Heart right ventricle (tissue), 16 donors: ENCODE measurements at regions of chrX and their contacts with region 1.

Region 1: GRCh38 chrX:69285881-69286564 is 120.8 kb upstream of the PJA1 start:
- DNase-seq: peak; percentile 49 to 71
- ATAC-seq: peak; percentile 72 to 89 (median 86)
- H3K4me3 ChIP-seq: peak overlapping the region; percentile 4 to 55 (median 45)
- H3K27ac ChIP-seq: peak overlapping the region in 3 of 10 donors; percentile 30 to 55 (median 31)
- H3K4me1 ChIP-seq: peaks cover 0 to 10% (median 5%) of the 10 kb centered on the region in 9 donors
- H3K27me3 ChIP-seq: peaks cover 0 to 36% (median 0%) of the 10 kb centered on the region in 7 donors
- CTCF ChIP-seq: peak; percentile 60 to 92 (median 83)

Region 2: GRCh38 chrX:68822641-68823410 is 463.2 kb before region 1 on chrX:
- intact Hi-C with region 1: loop called (anchors 2 to 5 kb)
- DNase-seq: peak in 1 of 2 donors; percentile 40
- ATAC-seq: peak; percentile 79 to 93 (median 90)
- H3K4me3 ChIP-seq: no peak overlapping the region
- H3K27ac ChIP-seq: no peak overlapping the region
- H3K4me1 ChIP-seq: peaks cover 0 to 9% (median 0%) of the 10 kb centered on the region in 9 donors
- H3K27me3 ChIP-seq: peaks cover 0 to 56% (median 0%) of the 10 kb centered on the region in 7 donors
- CTCF ChIP-seq: peak; percentile 33 to 75 (median 67)

Region 3: GRCh38 chrX:69070949-69071650 is 214.9 kb before region 1 on chrX:
- intact Hi-C with region 1: loop called in 3 of 10 experiments (anchors 10 kb)
- DNase-seq: peak; percentile 73 to 78
- ATAC-seq: peak; percentile 84 to 95 (median 92)
- H3K4me3 ChIP-seq: no peak overlapping the region
- H3K27ac ChIP-seq: peak overlapping the region in 4 of 10 donors; percentile 25 to 39 (median 30)
- H3K4me1 ChIP-seq: peaks cover 0 to 15% (median 4%) of the 10 kb centered on the region in 9 donors
- H3K27me3 ChIP-seq: peaks cover 0 to 25% (median 0%) of the 10 kb centered on the region in 7 donors
- CTCF ChIP-seq: no peak

Region 4: GRCh38 chrX:69229436-69229835 is 56.6 kb before region 1 on chrX:
- intact Hi-C with region 1: loop called in 6 of 10 experiments (anchors 5 to 10 kb)
- DNase-seq: no peak
- ATAC-seq: no peak
- H3K4me3 ChIP-seq: no peak overlapping the region
- H3K27ac ChIP-seq: no peak overlapping the region
- H3K4me1 ChIP-seq: no peaks in the 10 kb centered on the region
- H3K27me3 ChIP-seq: peaks cover 0 to 11% (median 0%) of the 10 kb centered on the region in 7 donors
- CTCF ChIP-seq: no peak

Region 5: DNA sequence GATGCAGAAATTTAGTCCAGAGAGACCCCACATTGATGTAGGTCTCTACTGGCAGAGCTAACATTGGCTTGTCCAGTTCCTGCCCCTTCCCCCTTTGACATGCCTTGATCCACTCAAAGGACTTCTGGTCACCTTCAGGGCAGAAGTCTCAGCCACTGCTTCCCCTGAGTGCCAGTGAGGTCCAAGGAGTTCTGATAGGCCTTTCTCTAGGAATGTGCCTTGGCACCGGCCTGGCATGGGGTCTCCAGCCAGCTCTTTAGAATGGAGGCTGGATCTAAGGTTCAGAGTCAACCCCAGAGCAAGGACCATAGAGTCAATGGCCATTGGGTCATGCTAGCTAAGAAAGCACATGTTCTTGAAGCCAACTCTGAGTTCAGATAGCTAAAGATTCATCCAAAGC is 32.2 kb before region 1 on chrX:
- intact Hi-C with region 1: no loop called
- DNase-seq: no peak
- ATAC-seq: no peak
- H3K4me3 ChIP-seq: no peak overlapping the region
- H3K27ac ChIP-seq: no peak overlapping the region
- H3K4me1 ChIP-seq: no peaks in the 10 kb centered on the region
- H3K27me3 ChIP-seq: no peaks in the 10 kb centered on the region
- CTCF ChIP-seq: no peak

Region 6: DNA sequence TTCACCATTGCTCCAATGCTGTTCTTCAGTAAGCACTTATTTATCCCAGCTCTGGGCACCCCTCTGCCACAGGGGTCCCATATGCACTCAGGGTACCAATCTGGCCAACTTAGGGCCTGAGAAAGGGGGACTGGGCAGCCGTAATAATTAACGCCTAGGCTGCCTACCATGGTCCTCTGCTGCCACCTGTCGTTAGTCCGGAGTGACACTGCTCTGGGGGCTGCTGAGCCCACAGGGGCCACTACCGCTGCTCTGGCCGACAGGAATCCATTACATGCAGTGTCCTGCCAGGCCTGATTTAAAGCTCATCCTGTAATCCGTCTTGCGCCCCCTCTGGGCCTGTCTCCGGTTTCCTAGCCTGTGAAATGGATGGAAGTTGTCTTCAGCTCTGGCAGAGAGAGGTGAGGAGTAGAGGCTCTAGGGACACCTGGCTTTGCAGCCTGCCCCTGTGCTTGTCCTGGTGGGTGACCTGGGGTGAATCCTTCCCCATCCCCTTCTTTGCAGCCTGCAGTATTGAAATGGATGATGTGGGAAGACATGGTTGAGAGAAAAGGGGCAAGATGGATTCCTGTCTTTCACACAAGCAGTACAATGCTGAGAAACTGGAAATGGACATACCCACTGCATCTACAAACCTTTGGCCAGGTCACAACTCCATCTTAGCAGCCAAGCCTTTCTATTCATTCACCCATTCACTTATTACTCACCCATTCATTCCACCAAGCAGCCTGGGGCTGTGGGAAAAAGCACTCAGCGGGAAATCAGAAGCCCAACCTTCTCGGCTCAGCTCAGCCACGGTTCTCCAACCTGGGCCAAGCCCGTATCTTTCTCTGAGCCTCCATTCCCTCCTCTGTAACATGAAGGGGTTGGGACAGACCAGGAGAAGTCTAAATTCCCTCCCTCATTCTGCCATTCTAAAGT is 101.8 kb after region 1 on chrX:
- intact Hi-C with region 1: loop called in 5 of 10 experiments (anchors 10 kb)
- DNase-seq: peak; percentile 32 to 33
- ATAC-seq: peak in 6 of 8 donors; percentile 46 to 75 (median 68)
- H3K4me3 ChIP-seq: no peak overlapping the region
- H3K27ac ChIP-seq: no peak overlapping the region
- H3K4me1 ChIP-seq: peaks cover 0 to 4% (median 0%) of the 10 kb centered on the region in 9 donors
- H3K27me3 ChIP-seq: peaks cover 0 to 65% (median 0%) of the 10 kb centered on the region in 7 donors
- CTCF ChIP-seq: peak; percentile 23 to 78 (median 70)